ENCODE measurements at regions of chr2 and their contacts with region 1.

Region 1: GRCh38 chr2:65264821-65265670 is 37.4 kb downstream of the ACTR2 start:
- DNase-seq: peak; percentile 20
- ATAC-seq: no peak
- H3K4me3 Mint-ChIP-seq: no peak overlapping the region
- H3K27ac Mint-ChIP-seq: no peak overlapping the region
- H3K4me1 Mint-ChIP-seq: peaks cover 18% of the 10 kb centered on the region
- H3K27me3 Mint-ChIP-seq: no peaks in the 10 kb centered on the region
- CTCF ChIP-seq: peak; percentile 87

Region 2: GRCh38 chr2:65277791-65278483 is 12.9 kb after region 1 on chr2:
- CTCF ChIA-PET with region 1: interaction called, 23 read pairs
- POLR2A ChIA-PET with region 1: interaction called, 7 read pairs
- intact Hi-C with region 1: no loop called
- DNase-seq: peak; percentile 6
- ATAC-seq: peak; percentile 45
- H3K4me3 Mint-ChIP-seq: no peak overlapping the region
- H3K27ac Mint-ChIP-seq: no peak overlapping the region
- H3K4me1 Mint-ChIP-seq: peaks cover 12% of the 10 kb centered on the region
- H3K27me3 Mint-ChIP-seq: no peaks in the 10 kb centered on the region
- CTCF ChIP-seq: no peak

Region 3: DNA sequence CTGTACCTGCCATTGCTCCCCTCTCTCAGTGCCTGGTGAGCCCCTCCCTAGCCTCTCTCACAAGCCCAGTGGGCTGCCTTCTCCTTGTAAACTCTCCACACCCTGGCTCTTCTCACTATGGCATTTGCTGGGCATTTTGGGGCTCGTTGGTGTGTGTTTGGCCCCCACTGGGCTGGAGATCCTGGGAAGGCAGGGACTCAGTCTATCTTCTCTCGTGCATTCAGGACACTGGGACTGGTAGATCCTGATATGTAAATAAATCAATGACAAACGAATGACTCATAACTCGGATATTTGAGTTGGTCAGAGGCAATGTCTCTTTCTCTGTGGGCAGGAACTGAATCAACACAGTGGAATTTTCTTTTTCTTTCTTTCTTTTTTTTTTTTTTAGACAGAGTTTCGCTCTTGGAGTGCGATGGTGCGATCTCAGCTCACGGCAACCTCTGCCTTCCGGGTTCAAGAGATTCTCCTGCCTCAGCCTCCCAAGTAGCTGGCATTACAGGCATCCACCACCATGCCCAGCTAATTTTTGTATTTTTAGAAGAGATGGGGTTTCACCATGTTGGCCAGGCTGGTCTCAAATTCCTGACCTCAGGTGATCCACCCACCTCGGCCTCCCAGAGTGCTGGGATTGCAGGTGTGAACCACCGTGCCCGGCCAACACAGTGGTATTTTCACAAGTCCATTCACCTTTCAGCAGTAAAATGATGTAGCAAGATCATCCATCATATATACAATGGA is 312.0 kb after region 1 on chr2:
- CTCF ChIA-PET with region 1: interaction called, 5 read pairs
- POLR2A ChIA-PET with region 1: no interaction called
- intact Hi-C with region 1: loop called (anchors 5 kb)
- DNase-seq: no peak
- ATAC-seq: no peak
- H3K4me3 Mint-ChIP-seq: no peak overlapping the region
- H3K27ac Mint-ChIP-seq: no peak overlapping the region
- H3K4me1 Mint-ChIP-seq: no peaks in the 10 kb centered on the region
- H3K27me3 Mint-ChIP-seq: peaks cover 5% of the 10 kb centered on the region
- CTCF ChIP-seq: no peak

Measured in activated CD8-positive, alpha-beta T cell treated with anti-CD3 and anti-CD28 coated beads for 36 hours (primary cell).